ENCODE measurements at regions of chr17 and their contacts with region 1.

Region 1: DNA sequence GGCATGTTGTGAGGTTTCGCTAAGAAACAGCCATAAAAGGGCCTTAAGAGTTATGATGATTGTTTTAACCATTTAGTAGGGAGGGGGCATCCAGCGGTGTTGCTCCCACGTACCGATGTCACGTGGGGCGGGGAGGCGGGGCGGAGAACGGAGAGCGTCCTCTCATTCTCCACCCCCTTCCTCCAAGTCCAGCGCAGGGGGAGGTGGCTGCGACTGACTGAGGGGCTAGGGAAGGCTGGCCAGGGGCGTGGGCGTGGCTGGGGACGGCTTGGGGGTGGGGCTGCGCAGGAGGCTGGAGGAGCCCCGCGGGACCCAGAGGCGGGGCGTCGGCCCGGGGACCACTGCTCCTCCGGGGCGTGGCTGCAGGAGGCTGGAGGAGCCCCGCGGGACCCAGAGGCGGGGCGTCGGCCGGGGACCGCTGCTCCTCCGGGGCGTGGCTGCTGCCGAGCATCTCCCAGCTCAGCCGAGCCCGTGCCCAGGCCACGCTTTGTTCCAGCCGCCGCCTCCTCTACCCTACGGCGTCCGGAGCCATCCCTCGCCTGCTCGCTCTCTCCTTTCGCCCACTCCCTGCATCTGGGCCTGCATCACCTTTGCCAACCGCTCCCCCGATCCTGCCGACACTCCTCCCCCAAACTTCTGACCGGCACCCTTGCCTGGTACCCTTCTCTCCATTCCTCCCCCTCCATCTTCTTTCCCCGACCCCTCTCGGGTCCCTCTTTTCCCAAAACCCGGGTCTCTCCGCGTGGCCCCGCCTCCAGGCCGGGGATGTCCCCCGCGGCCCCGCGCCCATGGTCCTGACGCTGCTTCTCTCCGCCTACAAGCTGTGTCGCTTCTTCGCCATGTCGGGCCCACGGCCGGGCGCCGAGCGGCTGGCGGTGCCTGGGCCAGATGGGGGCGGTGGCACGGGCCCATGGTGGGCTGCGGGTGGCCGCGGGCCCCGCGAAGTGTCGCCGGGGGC is at the start of gene SARM1:
- DNase-seq: peak; percentile 95
- ATAC-seq: peak; percentile 95
- H3K4me3 Mint-ChIP-seq: peak within 1 kb of the TSS; percentile 76
- H3K27ac Mint-ChIP-seq: peak within 1 kb of the TSS; percentile 86
- H3K4me1 Mint-ChIP-seq: peaks cover 22% of the 10 kb centered on the region
- H3K27me3 Mint-ChIP-seq: no peaks in the 10 kb centered on the region
- total RNA-seq, gene SARM1: 18.1 to 21.9 TPM

Region 2: GRCh38 chr17:28041068-28041843 is 330.3 kb before region 1 on chr17:
- CTCF ChIA-PET with region 1: no interaction called
- POLR2A ChIA-PET with region 1: no interaction called
- intact Hi-C with region 1: loop called in 1 of 2 experiments (anchors 1 kb)
- DNase-seq: peak; percentile 100
- ATAC-seq: peak; percentile 96
- H3K4me3 Mint-ChIP-seq: peak overlapping the region; percentile 79
- H3K27ac Mint-ChIP-seq: peak overlapping the region; percentile 74
- H3K4me1 Mint-ChIP-seq: peaks cover 52% of the 10 kb centered on the region
- H3K27me3 Mint-ChIP-seq: no peaks in the 10 kb centered on the region

Region 3: DNA sequence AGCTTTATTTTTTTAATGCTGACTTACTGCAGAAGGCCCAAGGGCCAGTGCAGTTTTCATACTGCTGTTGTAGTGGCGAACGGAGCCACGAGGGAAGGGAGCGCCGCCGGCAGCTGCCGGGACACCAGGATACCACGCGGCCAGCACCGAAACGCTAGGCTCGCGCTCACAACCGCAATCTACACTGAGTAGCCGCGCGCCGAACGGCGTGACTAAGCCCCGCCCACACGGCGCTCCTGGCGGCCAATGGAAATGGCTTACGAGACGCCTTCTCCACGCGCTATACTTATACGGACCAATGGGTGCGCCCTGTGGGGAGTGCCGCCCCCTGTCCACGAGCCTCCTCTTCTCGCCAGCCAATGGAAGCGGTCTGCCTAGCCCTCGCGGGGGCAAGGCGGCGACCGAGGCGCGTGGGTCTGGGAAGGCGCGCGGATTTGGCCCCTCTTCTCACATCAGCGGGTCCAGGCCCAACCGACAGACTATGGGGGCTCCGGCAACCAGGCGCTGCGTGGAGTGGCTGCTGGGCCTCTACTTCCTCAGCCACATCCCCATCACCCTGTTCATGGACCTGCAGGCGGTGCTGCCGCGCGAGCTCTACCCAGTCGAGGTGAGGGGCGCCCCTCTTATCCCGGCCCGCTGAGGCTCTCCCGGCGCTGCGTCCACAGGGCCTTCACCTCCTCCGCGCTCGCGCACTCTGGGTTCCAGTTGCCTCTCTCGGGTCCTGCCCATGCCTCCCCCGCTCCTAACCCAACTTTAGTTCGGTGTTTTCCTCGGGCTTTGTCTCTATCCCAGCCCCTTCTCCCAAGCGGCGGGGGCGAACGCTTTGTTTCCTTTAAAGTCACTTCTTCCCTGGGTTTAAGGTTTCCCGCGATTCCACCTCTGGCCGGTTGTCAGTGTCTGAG is 52.5 kb before region 1 on chr17 and contains the start of gene TMEM97:
- CTCF ChIA-PET with region 1: interaction called, 3 read pairs
- POLR2A ChIA-PET with region 1: no interaction called
- intact Hi-C with region 1: loop called in 1 of 2 experiments (anchors 1 kb)
- DNase-seq: peak; percentile 98
- ATAC-seq: peak; percentile 99
- H3K4me3 Mint-ChIP-seq: peak within 1 kb of the TSS; percentile 96
- H3K27ac Mint-ChIP-seq: peak within 1 kb of the TSS; percentile 88
- H3K4me1 Mint-ChIP-seq: peaks cover 30% of the 10 kb centered on the region
- H3K27me3 Mint-ChIP-seq: no peaks in the 10 kb centered on the region
- total RNA-seq, gene TMEM97: 31.0 to 49.3 TPM

Region 4: DNA sequence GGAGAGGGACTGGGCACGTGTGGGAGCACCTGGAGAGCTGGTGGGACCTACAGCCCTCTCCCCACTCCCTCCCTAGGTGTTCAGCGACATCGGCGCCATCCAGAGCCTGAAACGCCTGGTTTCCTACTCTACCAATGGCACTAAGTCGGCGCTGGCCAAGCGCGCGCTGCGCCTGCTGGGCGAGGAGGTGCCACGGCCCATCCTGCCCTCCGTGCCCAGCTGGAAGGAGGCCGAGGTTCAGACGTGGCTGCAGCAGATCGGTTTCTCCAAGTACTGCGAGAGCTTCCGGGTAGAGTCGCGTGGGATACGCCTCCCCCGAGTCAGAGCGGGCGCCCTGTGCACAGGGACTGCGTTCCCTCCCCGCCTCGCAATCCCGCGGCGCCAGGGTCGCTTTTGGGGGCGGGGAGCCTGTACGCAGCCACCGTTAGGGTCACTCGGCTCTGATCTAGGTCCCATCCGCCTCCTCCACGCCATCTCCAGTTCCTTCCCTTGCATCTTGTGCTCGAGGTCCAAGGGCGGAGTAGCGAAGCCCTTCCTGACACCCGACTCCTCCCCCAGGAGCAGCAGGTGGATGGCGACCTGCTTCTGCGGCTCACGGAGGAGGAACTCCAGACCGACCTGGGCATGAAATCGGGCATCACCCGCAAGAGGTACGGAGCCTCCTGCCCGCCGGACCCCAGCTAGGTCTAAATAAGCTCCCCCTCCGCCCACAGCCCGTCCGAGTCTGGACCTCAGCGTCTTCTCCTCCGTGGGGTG is 12.9 kb after region 1 on chr17:
- CTCF ChIA-PET with region 1: interaction called, 5 read pairs
- POLR2A ChIA-PET with region 1: interaction called, 3 read pairs
- intact Hi-C with region 1: loop called in 1 of 2 experiments (anchors 1 kb)
- DNase-seq: peak; percentile 85
- ATAC-seq: peak; percentile 93
- H3K4me3 Mint-ChIP-seq: peak overlapping the region; percentile 86
- H3K27ac Mint-ChIP-seq: peak overlapping the region; percentile 73
- H3K4me1 Mint-ChIP-seq: peaks cover 17% of the 10 kb centered on the region
- H3K27me3 Mint-ChIP-seq: peaks cover 11% of the 10 kb centered on the region

Region 5: GRCh38 chr17:28598799-28599310 is 227.3 kb after region 1 on chr17 and contains the start of gene SPAG5:
- CTCF ChIA-PET with region 1: no interaction called
- POLR2A ChIA-PET with region 1: no interaction called
- intact Hi-C with region 1: loop called in 1 of 2 experiments (anchors 1 kb)
- DNase-seq: peak; percentile 97
- ATAC-seq: peak; percentile 92
- H3K4me3 Mint-ChIP-seq: peak within 1 kb of the TSS; percentile 89
- H3K27ac Mint-ChIP-seq: peak within 1 kb of the TSS; percentile 98
- H3K4me1 Mint-ChIP-seq: peaks cover 21% of the 10 kb centered on the region
- H3K27me3 Mint-ChIP-seq: no peaks in the 10 kb centered on the region
- total RNA-seq, gene SPAG5: 142 to 165 TPM

Region 6: DNA sequence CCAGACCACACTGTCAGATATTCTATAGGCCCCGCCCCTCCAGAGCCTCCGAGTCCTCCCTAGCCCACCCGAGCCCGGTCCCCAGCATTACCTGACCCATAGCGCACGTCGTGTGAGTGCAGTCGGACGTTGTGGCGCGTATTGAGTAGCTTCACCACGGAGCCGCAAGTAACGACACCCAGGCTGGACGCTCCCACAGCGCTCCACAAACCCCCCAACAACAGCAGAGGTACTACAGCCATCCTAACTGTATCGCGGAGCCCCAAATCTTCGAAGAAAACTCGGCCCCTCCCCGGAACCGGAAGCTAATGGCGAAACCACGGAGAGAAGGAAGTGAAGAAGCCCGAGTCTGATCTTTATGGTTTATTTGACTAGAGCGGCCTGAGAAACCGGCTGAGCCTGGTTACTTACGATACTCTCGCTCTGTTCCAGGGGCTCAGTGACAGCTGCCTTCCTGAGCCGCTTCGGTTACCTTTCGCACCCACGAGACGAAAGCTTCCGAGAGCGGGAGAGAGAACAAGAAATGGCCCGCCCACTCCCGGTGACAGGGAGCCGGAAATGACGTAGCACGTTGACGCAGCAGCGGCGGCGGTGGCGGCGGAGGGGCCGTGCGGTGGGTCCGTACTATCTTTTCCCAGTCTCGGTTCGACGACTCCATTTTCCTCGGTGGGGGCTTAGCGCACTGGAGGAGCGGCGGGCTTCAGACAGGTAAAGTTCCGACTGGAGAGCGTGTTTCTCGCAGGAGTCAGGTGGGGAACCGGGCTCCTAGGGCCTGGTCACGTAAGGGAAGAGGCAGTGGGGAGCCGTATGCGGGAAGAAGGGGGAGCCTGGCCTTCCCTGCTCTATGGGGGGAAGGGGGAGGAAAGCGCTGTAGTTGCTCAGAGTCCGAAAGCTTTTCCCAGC is 290.4 kb after region 1 on chr17 and contains the starts of genes SDF2 and SUPT6H:
- CTCF ChIA-PET with region 1: no interaction called
- POLR2A ChIA-PET with region 1: no interaction called
- intact Hi-C with region 1: loop called in 1 of 2 experiments (anchors 1 kb)
- DNase-seq: peak; percentile 98
- ATAC-seq: peak; percentile 87
- H3K4me3 Mint-ChIP-seq: peak within 1 kb of the TSS; percentile 94
- H3K27ac Mint-ChIP-seq: peak within 1 kb of the TSS; percentile 99
- H3K4me1 Mint-ChIP-seq: peaks cover 48% of the 10 kb centered on the region
- H3K27me3 Mint-ChIP-seq: no peaks in the 10 kb centered on the region
- total RNA-seq, gene SDF2: 36.6 to 37.2 TPM
- total RNA-seq, gene SUPT6H: 80.6 to 85.8 TPM

Region 7: GRCh38 chr17:28710861-28711722 is 339.6 kb after region 1 on chr17:
- CTCF ChIA-PET with region 1: no interaction called
- POLR2A ChIA-PET with region 1: no interaction called
- intact Hi-C with region 1: loop called in 1 of 2 experiments (anchors 1 kb)
- DNase-seq: peak; percentile 94
- ATAC-seq: peak; percentile 90
- H3K4me3 Mint-ChIP-seq: peak overlapping the region; percentile 80
- H3K27ac Mint-ChIP-seq: peak overlapping the region; percentile 91
- H3K4me1 Mint-ChIP-seq: peaks cover 19% of the 10 kb centered on the region
- H3K27me3 Mint-ChIP-seq: peaks cover 17% of the 10 kb centered on the region